Common myeloid progenitor, CD34-positive (primary cell): ENCODE measurements at regions of chr18 and their contacts with region 1.

Region 1: DNA sequence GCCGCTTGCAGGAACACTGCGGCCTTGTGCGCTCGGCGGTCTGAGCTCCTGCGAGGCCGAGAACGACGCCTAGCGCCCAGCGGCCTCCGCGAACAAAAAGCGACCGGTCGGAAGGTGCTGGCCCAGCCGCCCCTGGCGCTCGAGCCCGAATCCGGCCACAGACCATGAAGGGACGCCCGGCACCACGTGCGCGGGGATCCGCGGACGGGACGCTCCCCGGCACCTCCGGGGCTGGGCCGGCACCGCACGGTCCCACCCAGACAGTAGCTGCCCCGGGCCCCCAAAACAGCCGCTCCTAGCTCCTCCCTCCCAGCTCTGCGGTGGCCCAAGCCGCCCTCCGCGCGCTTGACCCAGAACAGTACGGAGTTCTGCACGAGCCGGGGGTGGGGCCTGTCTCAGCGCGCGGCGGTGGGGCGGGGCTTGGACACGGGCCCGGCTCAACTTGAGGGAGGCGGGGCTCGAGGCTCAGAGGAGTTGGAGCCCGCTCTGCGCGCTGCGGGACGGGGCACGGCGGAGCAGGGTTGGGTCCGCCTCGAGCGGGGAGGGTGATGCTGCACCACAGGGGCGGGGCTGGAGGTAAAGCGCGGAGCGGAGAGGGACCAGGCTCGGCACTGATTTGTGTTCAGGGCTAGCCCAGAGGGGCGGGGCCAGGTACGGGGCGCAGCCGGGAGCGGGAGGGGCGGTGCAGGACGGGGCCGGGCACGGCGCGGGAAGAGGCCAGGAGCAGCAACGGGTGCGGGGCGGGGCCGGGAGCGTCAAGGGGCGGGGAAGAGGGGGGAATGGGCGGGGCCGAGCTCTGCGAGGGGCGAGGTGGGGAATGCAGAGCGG is 538 bp upstream of the IMPA2 start:
- DNase-seq: peak; percentile 97 to 99 (median 99)
- H3K4me3 ChIP-seq: peak overlapping the region; percentile 53 to 84 (median 68)
- H3K27ac ChIP-seq: peak overlapping the region in 1 of 2 experiments; percentile 68
- H3K4me1 ChIP-seq: peaks cover 10 to 46% (median 34%) of the 10 kb centered on the region in 4 experiments
- H3K27me3 ChIP-seq: no peaks in the 10 kb centered on the region

Region 2: GRCh38 chr18:11947214-11948191 is 33.3 kb before region 1 on chr18:
- CTCF ChIA-PET with region 1: interaction called, 667 read pairs
- POLR2A ChIA-PET with region 1: interaction called, 8 read pairs
- DNase-seq: peak; percentile 96 to 99 (median 98)
- H3K4me3 ChIP-seq: peak overlapping the region; percentile 62 to 81 (median 69)
- H3K27ac ChIP-seq: peak overlapping the region; percentile 88 to 94
- H3K4me1 ChIP-seq: peaks cover 4 to 33% (median 21%) of the 10 kb centered on the region in 4 experiments
- H3K27me3 ChIP-seq: no peaks in the 10 kb centered on the region

Region 3: DNA sequence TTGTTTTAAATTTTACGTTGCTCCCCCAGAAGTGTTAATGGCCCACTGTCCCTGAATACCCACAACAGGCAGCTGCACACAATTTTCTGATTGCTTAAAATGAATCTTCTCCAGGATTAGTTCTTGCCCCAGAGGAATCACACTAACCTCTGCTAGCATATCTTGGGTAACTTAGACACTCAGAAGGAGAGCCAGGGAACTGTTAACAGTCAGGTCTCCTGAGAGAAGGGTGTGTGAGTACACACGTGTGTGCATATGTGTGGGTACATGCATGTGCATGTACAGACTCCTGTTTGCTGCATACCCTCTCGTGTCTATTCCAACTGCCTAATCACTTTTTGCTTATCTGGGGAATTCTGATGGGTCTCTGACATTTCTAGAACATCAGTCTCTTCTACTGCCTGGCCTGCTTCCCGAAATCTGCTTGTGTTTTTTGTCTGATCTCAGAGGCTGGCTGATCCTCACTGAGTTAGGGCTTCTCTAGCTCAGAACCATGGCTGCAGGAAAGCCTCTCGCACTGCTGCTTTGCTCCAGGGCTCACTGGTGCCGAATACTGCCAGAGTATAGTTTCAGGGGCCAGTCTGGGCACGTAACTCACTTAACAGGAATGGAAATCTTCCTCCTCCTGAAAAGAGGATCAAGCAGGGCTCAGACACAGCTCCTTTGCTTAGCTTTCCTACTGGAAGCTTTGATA is 489.8 kb after region 1 on chr18:
- CTCF ChIA-PET with region 1: no interaction called
- POLR2A ChIA-PET with region 1: no interaction called
- DNase-seq: no peak
- H3K4me3 ChIP-seq: no peak overlapping the region
- H3K27ac ChIP-seq: no peak overlapping the region
- H3K4me1 ChIP-seq: peaks cover 0 to 2% (median 0%) of the 10 kb centered on the region in 4 experiments
- H3K27me3 ChIP-seq: no peaks in the 10 kb centered on the region